ENCODE measurements at regions of chr20 and their contacts with region 1.

Region 1: DNA sequence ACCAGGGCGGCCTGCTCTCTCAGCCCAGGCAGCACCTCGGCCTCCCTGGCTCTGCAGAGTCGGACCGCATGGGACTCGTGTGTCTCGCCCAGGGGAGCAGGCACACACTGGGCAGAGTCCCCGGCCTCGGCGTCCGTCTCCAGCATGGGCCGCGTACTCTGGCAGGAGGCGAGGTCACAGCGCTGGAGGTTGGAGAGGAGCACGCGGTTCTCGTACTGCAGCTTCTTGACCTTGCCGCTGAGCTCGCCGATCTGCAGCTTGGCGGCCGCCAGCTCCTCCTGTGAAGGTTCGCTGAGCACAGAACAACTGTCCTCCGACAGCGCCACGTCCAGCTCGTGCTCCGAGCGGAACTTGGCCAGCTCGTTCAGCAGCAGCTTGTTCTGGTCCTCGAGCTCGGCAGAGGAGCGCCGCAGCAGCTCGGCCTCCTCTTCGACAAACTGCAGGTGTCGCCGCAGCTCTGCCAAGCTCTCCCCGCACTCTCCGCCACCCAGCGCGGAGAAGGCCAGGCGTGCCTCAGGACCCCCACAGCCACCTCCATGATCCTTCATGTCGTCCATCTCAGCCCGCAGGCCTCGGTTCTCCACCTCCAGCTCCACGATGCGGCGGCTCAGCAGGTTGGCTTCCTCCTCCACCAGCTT is 42.0 kb upstream of the DSN1 start:
- DNase-seq: no peak
- H3K4me3 ChIP-seq: no peak overlapping the region
- H3K27ac ChIP-seq: no peak overlapping the region
- H3K4me1 ChIP-seq: peaks cover 3 to 6% (median 5%) of the 10 kb centered on the region in 4 experiments; a peak in 5 of 7 replicates
- H3K27me3 ChIP-seq: no peaks in the 10 kb centered on the region
- CTCF ChIP-seq: peak; percentile 27 to 38 (median 37)
- EP300 ChIP-seq: no peak
- POLR2A ChIP-seq: no peak
- RAD21 ChIP-seq: peak; percentile 56 to 62

Region 2: DNA sequence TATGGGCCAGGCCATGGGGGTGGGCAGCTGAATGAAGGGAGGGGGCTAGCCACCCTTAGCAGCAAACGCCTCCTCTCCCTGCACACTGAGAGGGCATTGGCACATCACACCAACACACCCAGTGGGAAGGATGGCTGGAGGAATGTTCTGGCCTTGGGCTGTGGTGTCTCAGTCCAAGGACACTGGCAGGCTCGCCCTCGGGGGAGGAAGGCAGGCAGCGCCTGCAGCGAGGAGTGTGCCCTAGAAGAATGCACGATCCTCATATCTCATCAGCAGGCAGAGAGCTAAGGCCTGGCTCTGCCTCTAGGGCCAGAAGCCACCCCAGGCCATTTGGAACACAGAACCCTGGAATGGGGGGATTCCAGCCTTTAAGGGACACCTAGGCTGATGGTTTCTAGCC is 12.3 kb after region 1 on chr20:
- CTCF ChIA-PET with region 1: interaction called, 19 read pairs
- POLR2A ChIA-PET with region 1: interaction called, 10 read pairs
- DNase-seq: no peak
- H3K4me3 ChIP-seq: no peak overlapping the region
- H3K27ac ChIP-seq: no peak overlapping the region
- H3K4me1 ChIP-seq: no peaks in the 10 kb centered on the region
- H3K27me3 ChIP-seq: no peaks in the 10 kb centered on the region
- CTCF ChIP-seq: no peak
- EP300 ChIP-seq: no peak
- POLR2A ChIP-seq: no peak
- RAD21 ChIP-seq: no peak

Region 3: DNA sequence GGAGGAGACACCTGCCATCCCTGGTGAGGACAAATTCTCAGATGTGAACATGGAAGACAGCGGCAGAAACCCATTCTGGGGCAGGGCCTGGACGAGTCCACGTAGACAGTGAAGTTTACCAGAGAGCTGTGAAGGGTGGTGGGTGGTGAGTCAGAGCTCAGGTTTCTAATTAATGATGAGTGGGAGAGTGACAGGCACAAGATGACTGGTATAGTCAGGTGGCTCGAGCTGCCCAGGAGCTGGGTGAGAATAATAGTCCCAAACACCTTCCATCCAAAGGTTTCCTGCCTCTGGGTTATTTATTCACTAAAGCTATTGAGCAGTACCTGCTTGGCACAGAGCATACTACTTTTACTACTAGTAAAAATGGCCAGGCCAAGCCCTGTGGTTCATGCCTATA is 66.3 kb after region 1 on chr20:
- CTCF ChIA-PET with region 1: interaction called, 27 read pairs
- POLR2A ChIA-PET with region 1: no interaction called
- DNase-seq: no peak
- H3K4me3 ChIP-seq: no peak overlapping the region
- H3K27ac ChIP-seq: no peak overlapping the region
- H3K4me1 ChIP-seq: peaks cover 0 to 5% (median 3%) of the 10 kb centered on the region in 4 experiments; a peak in 5 of 7 replicates
- H3K27me3 ChIP-seq: no peaks in the 10 kb centered on the region; a peak in 1 of 7 replicates
- CTCF ChIP-seq: no peak
- EP300 ChIP-seq: no peak
- POLR2A ChIP-seq: no peak
- RAD21 ChIP-seq: no peak

Region 4: GRCh38 chr20:37032077-37032476 is 216.5 kb after region 1 on chr20:
- CTCF ChIA-PET with region 1: no interaction called
- POLR2A ChIA-PET with region 1: no interaction called
- DNase-seq: no peak
- H3K4me3 ChIP-seq: no peak overlapping the region
- H3K27ac ChIP-seq: no peak overlapping the region
- H3K4me1 ChIP-seq: no peaks in the 10 kb centered on the region
- H3K27me3 ChIP-seq: no peaks in the 10 kb centered on the region
- CTCF ChIP-seq: no peak
- EP300 ChIP-seq: no peak
- POLR2A ChIP-seq: no peak
- RAD21 ChIP-seq: no peak